ENCODE measurements at regions of chr5 and their contacts with region 1.

Region 1: GRCh38 chr5:38441453-38442246 is 114.8 kb downstream of the LIFR start:
- DNase-seq: peak; percentile 85 to 90
- ATAC-seq: peak; percentile 76 to 90 (median 81)
- H3K4me3 ChIP-seq: no peak overlapping the region
- H3K27ac ChIP-seq: no peak overlapping the region
- H3K4me1 ChIP-seq: peaks cover 7% of the 10 kb centered on the region
- H3K27me3 ChIP-seq: no peaks in the 10 kb centered on the region
- CTCF ChIP-seq: peak; percentile 95

Region 2: DNA sequence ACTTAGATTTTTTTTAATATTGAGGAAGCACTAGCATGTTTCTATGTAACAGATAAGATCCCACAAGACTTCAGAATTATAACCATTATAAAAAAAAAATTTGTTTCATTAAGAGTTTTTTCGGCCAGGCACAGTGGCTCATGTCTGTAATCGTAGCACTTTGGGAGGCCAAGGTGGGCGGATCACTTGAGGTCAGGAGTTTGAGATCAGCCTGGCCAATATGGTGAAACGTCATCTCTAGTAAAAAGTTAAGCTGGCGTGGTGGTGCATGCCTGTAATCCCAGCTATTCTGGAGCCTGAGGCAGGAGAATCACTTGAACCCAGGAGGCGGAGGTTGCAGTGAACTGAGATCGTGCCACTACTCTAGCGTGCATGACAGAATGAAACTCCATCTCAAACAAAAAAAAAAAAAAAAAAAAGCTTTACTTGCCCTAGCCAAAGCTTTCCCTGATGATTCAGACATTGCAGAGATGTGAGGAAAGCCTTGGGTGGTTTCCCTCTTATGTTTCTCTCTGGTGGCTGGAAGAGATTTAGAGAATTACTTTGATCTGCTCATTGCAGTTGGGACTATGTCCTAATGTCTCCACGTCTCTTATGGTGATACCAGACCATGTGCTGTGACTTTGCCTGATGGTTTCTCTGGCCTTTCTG is 117.9 kb before region 1 on chr5:
- intact Hi-C with region 1: no loop called
- DNase-seq: peak in 1 of 2 donors; percentile 32
- ATAC-seq: peak; percentile 48 to 66 (median 56)
- H3K4me3 ChIP-seq: no peak overlapping the region
- H3K27ac ChIP-seq: no peak overlapping the region
- H3K4me1 ChIP-seq: no peaks in the 10 kb centered on the region
- H3K27me3 ChIP-seq: peaks cover 0 to 3% (median 0%) of the 10 kb centered on the region in 3 donors
- CTCF ChIP-seq: no peak

Region 3: DNA sequence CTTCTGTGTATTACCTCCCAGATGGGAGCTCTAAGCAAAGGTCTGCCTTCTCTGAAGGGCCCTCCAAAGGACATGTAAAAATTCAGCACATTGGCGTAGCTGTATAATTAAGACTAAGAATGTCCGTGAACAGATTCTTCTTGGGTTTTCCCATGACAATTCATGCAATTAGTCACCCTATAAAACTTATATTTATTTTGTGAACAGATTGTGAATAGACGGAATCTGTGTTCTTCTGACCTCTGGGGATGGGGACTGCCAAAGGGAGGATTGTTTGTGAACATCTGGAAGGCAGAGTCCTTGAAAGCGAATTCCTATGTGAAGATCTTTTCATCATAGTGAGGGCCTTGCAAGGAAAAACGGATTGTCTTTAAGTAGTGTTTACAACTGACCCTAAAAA is 72.0 kb before region 1 on chr5:
- intact Hi-C with region 1: no loop called
- DNase-seq: no peak
- ATAC-seq: no peak
- H3K4me3 ChIP-seq: no peak overlapping the region
- H3K27ac ChIP-seq: no peak overlapping the region
- H3K4me1 ChIP-seq: no peaks in the 10 kb centered on the region
- H3K27me3 ChIP-seq: peaks cover 0 to 3% (median 0%) of the 10 kb centered on the region in 3 donors
- CTCF ChIP-seq: no peak

Region 4: GRCh38 chr5:38483788-38484398 is 42.2 kb after region 1 on chr5:
- intact Hi-C with region 1: loop called (anchors 5 kb)
- DNase-seq: no peak
- ATAC-seq: peak; percentile 47 to 74 (median 56)
- H3K4me3 ChIP-seq: no peak overlapping the region
- H3K27ac ChIP-seq: no peak overlapping the region
- H3K4me1 ChIP-seq: no peaks in the 10 kb centered on the region
- H3K27me3 ChIP-seq: no peaks in the 10 kb centered on the region
- CTCF ChIP-seq: peak; percentile 22

Region 5: DNA sequence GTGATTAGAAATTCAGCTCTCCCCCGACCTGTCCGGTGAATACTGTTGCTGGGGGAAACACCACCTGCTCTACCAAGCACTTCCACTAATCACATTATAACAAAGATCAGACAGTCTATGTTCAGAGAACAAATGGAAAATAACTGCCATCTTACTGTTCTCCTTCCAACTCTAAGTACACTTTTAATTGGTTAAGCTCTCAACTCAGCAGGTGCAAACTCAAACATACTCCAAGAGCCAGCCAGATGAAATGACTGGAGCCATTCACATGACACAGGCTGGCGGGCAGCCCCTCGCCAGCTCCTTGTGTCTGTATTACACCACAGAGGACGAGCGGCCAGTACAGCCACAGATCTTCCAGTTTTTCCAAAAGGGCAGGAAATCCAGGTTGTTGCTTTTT is 98.7 kb after region 1 on chr5:
- intact Hi-C with region 1: no loop called
- DNase-seq: peak; percentile 63 to 82
- ATAC-seq: peak; percentile 95 to 97 (median 96)
- H3K4me3 ChIP-seq: peak overlapping the region; percentile 42
- H3K27ac ChIP-seq: peak overlapping the region; percentile 86
- H3K4me1 ChIP-seq: peaks cover 81% of the 10 kb centered on the region
- H3K27me3 ChIP-seq: no peaks in the 10 kb centered on the region
- CTCF ChIP-seq: no peak

Region 6: GRCh38 chr5:38639377-38640332 is 198.0 kb after region 1 on chr5:
- intact Hi-C with region 1: no loop called
- DNase-seq: no peak
- ATAC-seq: no peak
- H3K4me3 ChIP-seq: no peak overlapping the region
- H3K27ac ChIP-seq: no peak overlapping the region
- H3K4me1 ChIP-seq: no peaks in the 10 kb centered on the region
- H3K27me3 ChIP-seq: peaks cover 0 to 1% (median 0%) of the 10 kb centered on the region in 3 donors
- CTCF ChIP-seq: no peak

Region 7: DNA sequence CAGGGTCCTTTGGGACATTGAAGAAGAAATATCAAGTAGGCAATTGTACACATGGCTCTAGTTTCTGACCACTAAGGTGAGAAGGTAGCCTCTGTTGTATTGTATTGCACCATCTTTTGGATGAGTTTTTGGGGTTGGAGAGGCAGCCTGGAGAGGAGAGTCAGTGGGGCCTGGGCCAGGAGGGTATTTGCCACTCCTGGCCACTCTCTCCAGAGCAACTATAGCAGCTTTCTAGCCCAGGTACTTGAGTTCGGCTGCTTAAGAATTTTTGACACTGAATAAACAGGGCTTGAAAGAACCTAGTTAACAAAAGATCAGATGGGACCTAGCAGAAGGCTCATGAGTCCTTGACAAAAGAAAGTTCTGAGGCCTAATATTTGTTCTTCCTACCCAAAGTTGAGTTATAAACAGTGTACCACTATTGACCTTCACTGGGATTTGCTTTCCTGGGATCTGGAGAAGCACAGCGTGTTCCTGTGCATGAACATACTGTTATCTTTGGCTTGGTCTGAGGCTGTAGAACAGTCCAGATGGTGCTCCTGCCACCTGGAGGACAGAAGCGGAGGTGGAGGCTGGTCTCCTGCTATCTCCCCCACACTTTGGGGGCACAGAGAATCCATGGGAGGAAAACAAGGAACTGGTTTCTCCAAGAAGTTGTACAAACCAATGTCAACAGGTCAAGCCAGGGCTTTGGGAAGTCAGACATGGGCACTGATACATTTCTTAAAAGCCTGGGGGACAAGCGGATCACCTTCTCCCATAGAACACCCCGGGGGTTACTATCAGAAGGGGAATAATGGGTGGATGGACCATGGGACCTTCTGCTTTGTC is 225.2 kb after region 1 on chr5:
- intact Hi-C with region 1: loop called (anchors 1 to 5 kb)
- DNase-seq: peak; percentile 39 to 74
- ATAC-seq: peak; percentile 85 to 96 (median 94)
- H3K4me3 ChIP-seq: no peak overlapping the region
- H3K27ac ChIP-seq: no peak overlapping the region
- H3K4me1 ChIP-seq: peaks cover 22% of the 10 kb centered on the region
- H3K27me3 ChIP-seq: no peaks in the 10 kb centered on the region
- CTCF ChIP-seq: peak; percentile 72